ENCODE measurements at regions of chr19 and their contacts with region 1.

Region 1: GRCh38 chr19:38929929-38930775 is at the start of gene SARS2:
- DNase-seq: peak; percentile 92 to 98 (median 96)
- ATAC-seq: peak; percentile 85
- H3K4me3 ChIP-seq: peak within 1 kb of the TSS; percentile 94
- H3K4me3 Mint-ChIP-seq: peak within 1 kb of the TSS; percentile 94 to 100 (median 98)
- H3K27ac ChIP-seq: peak within 1 kb of the TSS; percentile 91
- H3K27ac Mint-ChIP-seq: peak within 1 kb of the TSS; percentile 94 to 100 (median 99)
- H3K4me1 ChIP-seq: peaks cover 21 to 55% of the 10 kb centered on the region in 2 donors
- H3K4me1 Mint-ChIP-seq: peaks cover 22 to 47% (median 39%) of the 10 kb centered on the region in 7 donors
- H3K27me3 ChIP-seq: no peaks in the 10 kb centered on the region
- H3K27me3 Mint-ChIP-seq: peaks cover 0 to 2% (median 0%) of the 10 kb centered on the region in 5 donors
- total RNA-seq, gene SARS2: 17.5 to 35.6 (median 25.4) TPM

Region 2: DNA sequence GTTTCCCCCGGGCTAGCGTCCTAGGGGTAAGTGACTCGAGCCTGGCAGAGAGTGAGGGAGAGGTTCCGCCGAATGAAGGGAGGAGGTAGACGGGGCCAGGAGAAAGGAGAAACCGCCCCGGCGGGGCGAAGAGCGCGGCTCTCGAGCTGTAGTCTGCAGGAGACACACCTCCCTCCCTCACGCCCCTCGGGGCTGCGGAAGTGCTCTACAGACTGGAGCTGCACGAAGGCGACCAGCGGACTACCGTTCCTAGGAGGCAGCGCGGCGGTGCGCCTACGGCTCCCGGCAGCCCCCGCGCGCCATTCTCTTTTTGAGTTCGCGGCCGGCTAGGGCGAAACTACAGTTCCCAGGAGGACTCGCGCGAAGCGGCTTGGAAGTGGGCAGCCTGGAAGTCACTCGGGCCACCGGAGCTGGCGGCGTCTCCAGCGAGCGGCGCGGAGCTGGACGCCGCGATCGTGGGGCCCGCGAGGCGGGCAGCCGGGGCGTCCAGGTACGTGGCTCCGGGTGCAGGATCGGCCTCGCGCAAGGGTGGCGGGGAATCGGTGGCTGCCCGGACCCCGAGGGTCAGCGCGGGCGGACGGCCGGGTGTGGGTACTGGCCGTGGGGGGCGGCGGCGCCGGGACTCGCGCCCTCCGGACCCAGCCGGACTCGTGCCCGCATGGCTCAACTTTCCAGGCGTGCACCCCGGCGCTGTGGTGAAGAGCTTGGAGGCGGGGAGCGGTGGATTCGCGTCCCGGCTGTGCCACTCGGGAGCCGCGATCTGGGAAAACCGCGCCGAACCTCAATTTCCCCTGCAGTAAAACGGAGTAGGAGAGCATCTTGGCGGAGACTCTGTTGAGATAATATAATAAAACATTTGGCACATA is 1023.0 kb before region 1 on chr19 and contains the start of gene SIPA1L3:
- CTCF ChIA-PET with region 1: no interaction called
- POLR2A ChIA-PET with region 1: interaction called, 4 read pairs
- intact Hi-C with region 1: loop called in 1 of 2 experiments (anchors 1 kb)
- DNase-seq: peak; percentile 77 to 91 (median 89)
- ATAC-seq: peak; percentile 99
- H3K4me3 ChIP-seq: peak within 1 kb of the TSS; percentile 99
- H3K4me3 Mint-ChIP-seq: peak within 1 kb of the TSS; percentile 69 to 96 (median 90)
- H3K27ac ChIP-seq: peak within 1 kb of the TSS; percentile 89
- H3K27ac Mint-ChIP-seq: peak within 1 kb of the TSS; percentile 67 to 95 (median 90)
- H3K4me1 ChIP-seq: peaks cover 6 to 9% of the 10 kb centered on the region in 2 donors
- H3K4me1 Mint-ChIP-seq: peaks cover 24 to 39% (median 35%) of the 10 kb centered on the region in 7 donors
- H3K27me3 ChIP-seq: no peaks in the 10 kb centered on the region
- H3K27me3 Mint-ChIP-seq: peaks cover 0 to 2% (median 0%) of the 10 kb centered on the region in 5 donors
- total RNA-seq, gene SIPA1L3: 17.4 to 38.7 (median 34.8) TPM

Region 3: GRCh38 chr19:38402967-38403861 is 526.9 kb before region 1 on chr19 and contains the start of gene FAM98C:
- CTCF ChIA-PET with region 1: interaction called, 15 read pairs
- POLR2A ChIA-PET with region 1: interaction called, 21 read pairs
- intact Hi-C with region 1: loop called (anchors 1 kb)
- DNase-seq: peak; percentile 97 to 99 (median 99)
- ATAC-seq: peak; percentile 98
- H3K4me3 ChIP-seq: peak within 1 kb of the TSS; percentile 79
- H3K4me3 Mint-ChIP-seq: peak within 1 kb of the TSS; percentile 79 to 98 (median 90)
- H3K27ac ChIP-seq: peak within 1 kb of the TSS; percentile 83
- H3K27ac Mint-ChIP-seq: peak within 1 kb of the TSS; percentile 79 to 97 (median 95)
- H3K4me1 ChIP-seq: peaks cover 5 to 8% of the 10 kb centered on the region in 2 donors
- H3K4me1 Mint-ChIP-seq: peaks cover 7 to 21% (median 19%) of the 10 kb centered on the region in 7 donors
- H3K27me3 ChIP-seq: no peaks in the 10 kb centered on the region
- H3K27me3 Mint-ChIP-seq: peaks cover 0 to 10% (median 0%) of the 10 kb centered on the region in 5 donors
- total RNA-seq, gene FAM98C: 33.8 to 56.5 (median 44.7) TPM

Region 4: GRCh38 chr19:38634757-38635482 is 295.2 kb before region 1 on chr19:
- CTCF ChIA-PET with region 1: interaction called, 3 read pairs
- POLR2A ChIA-PET with region 1: interaction called, 4 read pairs
- intact Hi-C with region 1: loop called (anchors 1 kb)
- DNase-seq: peak; percentile 42 to 79 (median 58)
- ATAC-seq: peak; percentile 64
- H3K4me3 ChIP-seq: no peak overlapping the region
- H3K4me3 Mint-ChIP-seq: peak overlapping the region in 9 of 10 donors; percentile 21 to 65 (median 47)
- H3K27ac ChIP-seq: no peak overlapping the region
- H3K27ac Mint-ChIP-seq: peak overlapping the region; percentile 2 to 81 (median 69)
- H3K4me1 ChIP-seq: peaks cover 23 to 24% of the 10 kb centered on the region in 2 donors
- H3K4me1 Mint-ChIP-seq: peaks cover 14 to 40% (median 35%) of the 10 kb centered on the region in 7 donors
- H3K27me3 ChIP-seq: no peaks in the 10 kb centered on the region
- H3K27me3 Mint-ChIP-seq: no peaks in the 10 kb centered on the region

Region 5: DNA sequence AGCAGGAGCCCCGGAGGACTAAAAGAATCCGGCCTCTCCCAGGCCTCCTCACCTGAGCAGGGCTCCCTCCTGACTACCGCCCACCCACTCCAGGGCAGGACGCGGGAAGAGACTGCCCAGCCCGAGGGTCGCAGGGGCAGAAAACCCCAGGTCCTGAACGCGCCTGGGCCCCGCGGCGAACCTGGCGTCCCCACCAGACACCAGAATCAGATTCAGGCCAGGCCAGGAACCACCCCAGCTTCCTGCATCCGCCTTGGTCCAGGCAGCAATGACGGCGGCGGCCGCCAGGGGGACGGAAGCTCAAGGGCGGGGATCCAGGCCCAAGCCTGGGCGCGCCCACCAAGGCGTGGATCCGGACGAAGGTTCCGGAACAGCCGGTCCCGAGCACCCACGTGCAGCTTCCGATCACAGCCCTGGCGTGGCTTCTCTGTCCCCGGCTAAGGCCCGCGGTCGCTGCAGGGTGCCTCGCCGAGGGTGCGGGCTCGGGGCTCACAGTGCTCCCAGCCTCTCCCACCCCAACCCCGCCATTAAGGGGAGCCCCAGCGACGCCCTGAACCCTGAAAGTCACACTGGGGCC is 160.4 kb before region 1 on chr19:
- CTCF ChIA-PET with region 1: interaction called, 8 read pairs
- POLR2A ChIA-PET with region 1: interaction called, 4 read pairs
- intact Hi-C with region 1: loop called in 1 of 2 experiments (anchors 2 kb)
- DNase-seq: peak; percentile 81 to 97 (median 86)
- ATAC-seq: peak; percentile 93
- H3K4me3 ChIP-seq: peak overlapping the region; percentile 33
- H3K4me3 Mint-ChIP-seq: peak overlapping the region; percentile 30 to 74 (median 61)
- H3K27ac ChIP-seq: peak overlapping the region; percentile 52
- H3K27ac Mint-ChIP-seq: peak overlapping the region; percentile 56 to 90 (median 83)
- H3K4me1 ChIP-seq: peaks cover 0 to 5% of the 10 kb centered on the region in 2 donors
- H3K4me1 Mint-ChIP-seq: peaks cover 0 to 10% (median 6%) of the 10 kb centered on the region in 7 donors
- H3K27me3 ChIP-seq: no peaks in the 10 kb centered on the region
- H3K27me3 Mint-ChIP-seq: no peaks in the 10 kb centered on the region

Region 6: DNA sequence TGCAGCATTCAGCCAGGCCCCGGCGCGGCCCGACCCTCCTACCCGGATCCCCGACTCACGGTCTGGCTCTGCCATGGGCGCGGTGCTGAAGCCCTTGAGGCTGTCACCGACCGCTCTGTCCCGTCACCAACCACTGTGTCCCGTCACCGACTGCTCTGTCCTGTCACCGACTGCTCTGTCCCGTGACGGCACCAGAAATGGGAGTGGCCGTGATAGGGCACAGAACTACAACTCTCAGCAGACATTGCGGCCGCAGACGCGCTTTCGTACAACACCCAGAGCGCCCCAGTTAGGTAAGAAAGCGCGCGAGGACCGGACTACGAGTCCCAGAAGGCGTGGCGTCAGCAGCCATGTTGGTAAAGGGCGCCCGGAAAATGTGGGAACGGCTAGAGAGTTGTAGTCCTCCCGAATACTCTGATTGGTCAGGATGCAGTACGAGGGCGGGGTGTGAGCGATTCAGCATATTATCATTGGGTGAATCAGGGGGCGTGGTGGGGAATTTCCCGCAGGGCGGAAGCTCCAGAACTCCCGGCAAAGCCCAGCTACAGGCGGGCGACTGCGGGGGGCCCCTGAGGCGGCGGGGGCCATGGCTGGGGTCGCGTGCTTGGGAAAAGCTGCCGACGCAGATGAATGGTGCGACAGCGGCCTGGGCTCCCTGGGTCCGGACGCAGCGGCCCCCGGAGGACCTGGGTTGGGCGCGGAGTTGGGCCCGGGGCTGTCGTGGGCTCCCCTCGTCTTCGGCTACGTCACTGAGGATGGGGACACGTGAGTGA is 30.5 kb before region 1 on chr19 and contains the starts of genes NFKBIB and SIRT2:
- CTCF ChIA-PET with region 1: interaction called, 21 read pairs
- POLR2A ChIA-PET with region 1: interaction called, 12 read pairs
- intact Hi-C with region 1: loop called (anchors 1 kb)
- DNase-seq: peak; percentile 86 to 100 (median 99)
- ATAC-seq: peak; percentile 93
- H3K4me3 ChIP-seq: peak within 1 kb of the TSS; percentile 74
- H3K4me3 Mint-ChIP-seq: peak within 1 kb of the TSS; percentile 88 to 100 (median 96)
- H3K27ac ChIP-seq: peak within 1 kb of the TSS; percentile 97
- H3K27ac Mint-ChIP-seq: peak within 1 kb of the TSS; percentile 86 to 99 (median 94)
- H3K4me1 ChIP-seq: peaks cover 15 to 29% of the 10 kb centered on the region in 2 donors
- H3K4me1 Mint-ChIP-seq: peaks cover 27 to 74% (median 50%) of the 10 kb centered on the region in 7 donors
- H3K27me3 ChIP-seq: no peaks in the 10 kb centered on the region
- H3K27me3 Mint-ChIP-seq: no peaks in the 10 kb centered on the region
- total RNA-seq, gene NFKBIB: 21.7 to 51.8 (median 34.1) TPM
- total RNA-seq, gene SIRT2: 42.9 to 78.5 (median 54.0) TPM

Region 7: DNA sequence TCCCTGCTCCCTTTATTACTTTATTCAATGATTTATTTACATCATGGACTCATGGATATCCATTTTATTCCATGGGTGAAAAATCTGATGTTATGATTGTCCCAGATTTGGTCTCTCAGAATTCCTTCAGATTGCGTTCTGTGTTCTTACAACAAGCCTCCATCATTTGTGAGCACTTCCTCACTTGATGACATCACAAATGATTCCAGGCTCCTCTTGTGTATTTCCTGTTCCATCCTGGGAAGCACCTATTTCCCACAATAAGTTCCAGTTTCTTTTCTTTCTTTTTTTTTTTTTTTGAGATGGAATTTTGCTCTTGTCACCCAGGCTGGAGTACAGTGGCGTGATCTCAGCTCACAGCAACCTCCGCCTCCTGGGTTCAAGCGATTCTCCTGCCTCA is 160.7 kb after region 1 on chr19:
- CTCF ChIA-PET with region 1: no interaction called
- POLR2A ChIA-PET with region 1: no interaction called
- intact Hi-C with region 1: no loop called
- DNase-seq: no peak
- ATAC-seq: no peak
- H3K4me3 ChIP-seq: no peak overlapping the region
- H3K4me3 Mint-ChIP-seq: no peak overlapping the region
- H3K27ac ChIP-seq: no peak overlapping the region
- H3K27ac Mint-ChIP-seq: no peak overlapping the region
- H3K4me1 ChIP-seq: no peaks in the 10 kb centered on the region
- H3K4me1 Mint-ChIP-seq: peaks cover 0 to 4% (median 0%) of the 10 kb centered on the region in 7 donors
- H3K27me3 ChIP-seq: no peaks in the 10 kb centered on the region
- H3K27me3 Mint-ChIP-seq: peaks cover 12 to 31% (median 19%) of the 10 kb centered on the region in 5 donors

Region 8: GRCh38 chr19:39941615-39942365 is 1011.6 kb after region 1 on chr19:
- CTCF ChIA-PET with region 1: no interaction called
- POLR2A ChIA-PET with region 1: no interaction called
- intact Hi-C with region 1: loop called in 1 of 2 experiments (anchors 5 kb)
- DNase-seq: peak in 8 of 9 donors; percentile 33 to 85 (median 78)
- ATAC-seq: peak; percentile 91
- H3K4me3 ChIP-seq: peak overlapping the region; percentile 49
- H3K4me3 Mint-ChIP-seq: peak overlapping the region; percentile 74 to 85 (median 78)
- H3K27ac ChIP-seq: peak overlapping the region; percentile 77
- H3K27ac Mint-ChIP-seq: peak overlapping the region; percentile 72 to 93 (median 87)
- H3K4me1 ChIP-seq: peaks cover 56 to 62% of the 10 kb centered on the region in 2 donors
- H3K4me1 Mint-ChIP-seq: peaks cover 62 to 95% (median 77%) of the 10 kb centered on the region in 7 donors
- H3K27me3 ChIP-seq: no peaks in the 10 kb centered on the region
- H3K27me3 Mint-ChIP-seq: no peaks in the 10 kb centered on the region